PC-9 (cell line): ENCODE measurements at regions of chr9 and their contacts with region 1.

Region 1: DNA sequence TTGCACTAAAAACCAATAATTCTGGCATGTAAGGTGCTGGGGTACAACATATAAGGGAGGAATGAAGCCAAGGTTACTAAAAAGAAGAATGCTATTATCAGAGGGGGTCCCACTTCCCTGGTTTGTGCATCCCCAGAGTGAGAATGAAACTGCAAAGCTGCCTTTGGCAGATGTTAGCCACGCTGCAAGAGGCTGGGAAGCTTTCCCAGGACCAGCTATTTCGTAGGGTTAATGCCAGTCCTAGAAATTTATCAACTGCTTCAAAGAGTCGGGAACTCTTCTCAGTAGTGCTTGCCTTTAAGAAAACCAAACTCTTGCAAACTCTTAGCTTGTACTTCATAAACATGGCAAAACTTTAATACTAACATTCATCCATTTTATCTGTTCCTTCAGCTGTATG is 87.5 kb upstream of the NR5A1 start:
- DNase-seq: no peak
- H3K4me3 ChIP-seq: no peak overlapping the region
- H3K27ac ChIP-seq: no peak overlapping the region
- H3K4me1 ChIP-seq: peaks cover 27% of the 10 kb centered on the region
- H3K27me3 ChIP-seq: no peaks in the 10 kb centered on the region
- CTCF ChIP-seq: no peak

Region 2: DNA sequence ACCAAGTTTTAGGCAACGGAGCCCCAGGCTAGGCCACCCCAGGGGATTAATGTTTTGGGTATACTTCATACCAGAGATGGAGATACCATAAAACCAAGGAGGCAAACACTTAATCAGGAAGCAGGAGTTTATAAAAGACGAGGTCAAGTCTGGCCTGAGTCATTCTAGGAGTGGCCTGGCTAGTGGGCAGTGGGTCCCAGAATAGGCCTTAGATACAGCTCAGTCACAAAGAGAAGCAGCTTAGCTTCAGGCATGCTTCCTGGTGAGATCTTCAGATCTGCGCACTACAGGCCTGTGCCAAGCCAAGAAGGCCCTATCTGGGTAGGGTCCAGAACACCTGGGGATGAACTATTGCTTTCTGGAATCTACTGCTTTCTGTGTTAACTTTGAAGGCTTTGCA is 66.9 kb before region 1 on chr9:
- CTCF ChIA-PET with region 1: no interaction called
- POLR2A ChIA-PET with region 1: no interaction called
- intact Hi-C with region 1: no loop called
- DNase-seq: peak; percentile 73 to 92
- H3K4me3 ChIP-seq: no peak overlapping the region
- H3K27ac ChIP-seq: peak overlapping the region; percentile 70
- H3K4me1 ChIP-seq: peaks cover 22% of the 10 kb centered on the region
- H3K27me3 ChIP-seq: no peaks in the 10 kb centered on the region
- CTCF ChIP-seq: no peak

Region 3: GRCh38 chr9:124665391-124666058 is 70.9 kb after region 1 on chr9:
- CTCF ChIA-PET with region 1: no interaction called
- POLR2A ChIA-PET with region 1: no interaction called
- intact Hi-C with region 1: no loop called
- DNase-seq: peak in 1 of 2 experiments; percentile 63
- H3K4me3 ChIP-seq: no peak overlapping the region
- H3K27ac ChIP-seq: no peak overlapping the region
- H3K4me1 ChIP-seq: peaks cover 27% of the 10 kb centered on the region
- H3K27me3 ChIP-seq: no peaks in the 10 kb centered on the region
- CTCF ChIP-seq: no peak

Region 4: DNA sequence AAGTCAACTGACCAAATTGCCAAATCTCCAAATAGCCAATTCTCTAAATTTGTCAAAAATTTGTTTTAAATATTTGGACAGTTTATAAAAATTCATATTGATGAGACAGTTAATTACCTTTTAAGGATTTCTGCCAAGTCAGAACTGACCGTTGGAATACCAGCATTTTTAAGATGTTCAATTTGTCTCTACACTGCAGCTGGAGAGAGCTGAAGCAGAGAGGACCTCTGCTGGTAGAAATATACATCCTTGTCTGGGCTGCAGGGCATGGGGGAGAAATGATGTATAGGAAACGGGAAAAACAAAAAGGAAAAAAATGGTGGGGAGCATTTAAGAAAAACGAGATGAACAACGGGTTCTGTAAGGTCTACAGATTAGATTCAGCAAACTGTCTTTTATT is 159.6 kb after region 1 on chr9:
- CTCF ChIA-PET with region 1: no interaction called
- POLR2A ChIA-PET with region 1: interaction called, 12 read pairs
- intact Hi-C with region 1: no loop called
- DNase-seq: no peak
- H3K4me3 ChIP-seq: no peak overlapping the region
- H3K27ac ChIP-seq: no peak overlapping the region
- H3K4me1 ChIP-seq: peaks cover 27% of the 10 kb centered on the region
- H3K27me3 ChIP-seq: no peaks in the 10 kb centered on the region
- CTCF ChIP-seq: peak; percentile 33; the same call in 1 of the 2 replicates